A549 (cell line): ENCODE measurements at regions of chr10 and their contacts with region 1.

Region 1: DNA sequence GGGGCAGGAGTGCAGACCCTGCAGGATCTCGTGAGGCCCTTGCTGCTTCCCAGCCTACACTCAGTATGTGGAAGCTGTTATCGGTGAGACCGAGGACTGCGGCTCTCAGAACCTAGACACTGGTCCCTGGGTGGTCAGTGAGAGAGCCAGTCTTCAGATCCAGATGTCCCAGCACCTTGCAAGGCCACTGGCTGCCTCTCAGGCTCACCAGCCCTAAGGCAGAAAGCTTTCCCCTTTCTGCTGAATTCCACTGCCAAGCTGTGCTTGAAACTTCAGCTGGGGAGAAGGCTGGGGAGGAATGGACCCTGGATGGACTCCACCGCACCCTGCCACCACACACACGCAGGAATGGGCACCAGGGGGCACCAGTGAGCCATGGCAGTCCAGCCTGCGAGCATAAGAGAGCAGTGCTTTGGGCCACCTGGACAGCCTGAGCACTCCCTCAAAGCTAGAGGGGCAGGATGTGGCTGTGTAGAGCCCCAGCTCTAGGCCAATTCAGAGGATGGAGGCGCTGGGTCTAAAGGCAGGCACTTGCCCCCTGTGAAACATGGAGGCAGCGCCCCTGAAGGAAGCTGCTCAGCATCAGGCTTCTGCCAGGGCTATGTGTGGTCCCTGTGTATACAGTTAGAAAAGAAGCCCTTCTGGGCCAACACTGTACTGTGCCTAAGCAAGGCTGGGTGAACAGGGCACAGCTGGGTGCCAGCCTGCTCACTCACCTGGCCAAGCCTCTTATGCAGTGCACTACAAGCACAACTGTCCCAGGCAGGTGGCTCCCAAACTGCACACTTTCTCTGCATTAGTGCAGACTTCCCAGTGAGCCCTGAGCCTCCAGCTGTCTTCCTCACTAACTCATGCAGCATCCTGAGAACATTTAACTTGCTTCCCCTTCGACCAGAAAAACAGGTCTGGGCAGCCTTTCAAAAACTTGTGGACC is 21.6 kb downstream of the TMEM72 start:
- DNase-seq: peak; percentile 36 to 71
- ATAC-seq: peak; percentile 92 to 98
- H3K4me3 ChIP-seq: no peak overlapping the region
- H3K27ac ChIP-seq: no peak overlapping the region
- H3K4me1 ChIP-seq: no peaks in the 10 kb centered on the region
- CTCF ChIP-seq: peak; percentile 73
- EP300 ChIP-seq: no peak
- POLR2A ChIP-seq: no peak
- RAD21 ChIP-seq: peak; percentile 84 to 90

Region 2: GRCh38 chr10:44116474-44116873 is 816.3 kb before region 1 on chr10:
- CTCF ChIA-PET with region 1: no interaction called
- POLR2A ChIA-PET with region 1: no interaction called
- DNase-seq: no peak
- ATAC-seq: no peak
- H3K4me3 ChIP-seq: no peak overlapping the region
- H3K27ac ChIP-seq: no peak overlapping the region
- H3K4me1 ChIP-seq: no peaks in the 10 kb centered on the region
- CTCF ChIP-seq: no peak
- EP300 ChIP-seq: no peak
- POLR2A ChIP-seq: no peak
- RAD21 ChIP-seq: no peak

Region 3: DNA sequence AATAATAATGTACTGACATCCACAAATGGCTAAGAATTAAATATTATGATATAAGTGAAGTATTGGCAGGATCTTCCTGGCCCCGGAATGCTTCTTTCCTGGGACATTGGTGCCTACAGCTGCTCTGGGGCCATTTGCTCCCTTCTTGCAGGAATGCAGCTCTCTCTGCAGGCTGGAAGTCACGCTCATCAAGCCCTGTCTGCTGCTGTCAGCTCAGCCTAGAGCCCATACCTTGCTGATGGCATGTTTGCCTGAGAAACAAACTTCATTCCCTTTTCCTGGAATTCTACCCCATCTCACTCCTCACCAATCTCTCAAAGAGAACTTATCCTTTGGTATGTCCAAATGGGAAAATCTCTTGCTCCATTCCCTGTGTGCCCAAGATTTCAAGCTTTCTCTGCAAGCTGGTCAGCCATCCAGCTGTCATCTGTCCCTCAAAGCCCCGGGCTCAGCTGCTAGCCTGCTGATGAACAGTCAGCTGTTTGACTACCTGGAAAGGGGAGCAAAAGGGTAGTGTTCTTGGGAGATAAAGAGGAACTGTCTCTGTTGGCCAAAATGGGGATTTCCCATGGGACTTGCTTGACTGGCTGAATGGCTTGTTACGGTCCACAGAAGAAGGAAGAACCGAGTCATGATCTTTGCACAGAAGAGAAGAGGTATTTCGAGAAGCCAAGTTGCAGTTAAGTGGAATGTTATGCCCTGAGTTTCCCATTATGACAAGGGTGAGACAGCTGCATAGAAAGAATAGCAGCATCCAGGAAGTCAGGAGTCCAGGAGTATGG is 14.8 kb after region 1 on chr10:
- CTCF ChIA-PET with region 1: interaction called, 25 read pairs
- POLR2A ChIA-PET with region 1: no interaction called
- DNase-seq: no peak
- ATAC-seq: no peak
- H3K4me3 ChIP-seq: no peak overlapping the region
- H3K27ac ChIP-seq: no peak overlapping the region
- H3K4me1 ChIP-seq: no peaks in the 10 kb centered on the region
- CTCF ChIP-seq: no peak
- EP300 ChIP-seq: no peak
- POLR2A ChIP-seq: no peak
- RAD21 ChIP-seq: no peak

Region 4: DNA sequence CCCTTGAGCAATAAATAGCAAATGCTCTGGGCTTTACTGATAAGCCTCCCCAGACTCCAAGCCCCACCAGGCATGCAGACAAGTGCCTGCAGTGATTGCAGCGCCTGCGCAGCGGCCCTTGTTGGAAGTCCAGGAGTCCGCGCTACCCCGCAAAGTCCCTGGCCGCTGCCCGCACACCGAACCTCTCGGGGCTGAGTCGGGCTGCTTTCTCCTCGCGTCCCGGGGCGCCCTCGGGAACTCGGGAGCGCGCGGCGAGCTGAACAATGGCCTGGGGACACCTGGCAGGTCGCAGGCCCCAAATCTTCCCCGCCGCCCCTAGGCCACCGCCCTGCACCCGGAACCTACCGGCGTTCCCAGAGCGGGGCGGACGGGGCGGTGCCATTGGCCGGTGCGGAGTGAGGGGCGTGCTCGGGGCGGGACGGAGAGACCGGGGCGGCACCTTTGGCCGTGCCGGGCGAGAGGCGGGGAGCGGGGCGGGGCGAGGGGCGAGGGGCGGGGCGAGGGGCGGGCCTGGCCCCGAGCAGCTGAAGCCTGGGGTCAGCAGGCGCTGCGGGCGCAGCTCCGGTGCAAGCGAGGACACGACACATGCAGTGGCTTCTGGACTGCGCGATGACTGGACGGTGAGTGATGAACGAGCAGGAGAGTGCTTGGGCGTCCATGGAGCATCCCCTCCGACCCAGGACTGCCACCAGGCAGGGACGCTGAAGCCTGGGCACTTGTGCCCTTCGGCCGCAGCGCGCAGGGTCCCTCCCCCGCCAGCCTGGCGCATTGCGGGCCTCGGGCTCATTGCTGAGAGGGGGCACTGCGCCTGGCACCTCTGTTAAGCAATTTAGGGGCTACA is 26.7 kb after region 1 on chr10 and contains the start of gene RASSF4:
- CTCF ChIA-PET with region 1: interaction called, 22 read pairs
- POLR2A ChIA-PET with region 1: no interaction called
- DNase-seq: peak; percentile 85 to 89
- ATAC-seq: peak; percentile 97 to 100
- H3K4me3 ChIP-seq: peak within 1 kb of the TSS; percentile 53
- H3K27ac ChIP-seq: peak within 1 kb of the TSS; percentile 86
- H3K4me1 ChIP-seq: peaks cover 12% of the 10 kb centered on the region; the same call in 2 of the 3 replicates
- CTCF ChIP-seq: no peak
- EP300 ChIP-seq: no peak
- POLR2A ChIP-seq: peak; percentile 82
- RAD21 ChIP-seq: no peak
- polyA plus RNA-seq, gene RASSF4: 2.1 and 2.2 TPM in 2 replicates

Region 5: DNA sequence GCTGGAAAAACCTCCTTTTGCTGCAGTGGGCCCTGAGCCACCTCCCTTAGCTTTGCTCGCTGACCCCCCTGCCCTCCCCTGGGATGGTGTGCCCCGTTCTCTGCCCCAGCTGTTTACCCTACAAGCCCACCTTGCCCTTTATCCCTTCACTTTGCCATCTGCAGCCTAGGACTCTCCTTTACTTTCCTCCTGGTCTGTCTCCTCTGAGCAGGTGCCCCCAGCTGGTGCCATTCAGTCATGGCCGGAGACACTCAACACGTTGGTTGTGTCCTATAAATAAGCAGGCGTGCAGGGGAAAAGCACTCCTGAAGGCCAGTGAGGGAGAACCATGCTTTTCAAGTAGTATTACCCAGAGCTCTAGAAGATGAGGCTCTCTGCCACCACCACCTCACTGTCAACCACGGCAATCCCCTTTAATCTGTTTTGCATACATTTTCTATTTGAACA is 32.9 kb after region 1 on chr10:
- CTCF ChIA-PET with region 1: interaction called, 29 read pairs
- POLR2A ChIA-PET with region 1: no interaction called
- DNase-seq: no peak
- ATAC-seq: no peak
- H3K4me3 ChIP-seq: no peak overlapping the region
- H3K27ac ChIP-seq: no peak overlapping the region; a peak in 1 of 6 replicates
- H3K4me1 ChIP-seq: peaks cover 7% of the 10 kb centered on the region; the same call in 2 of the 3 replicates
- CTCF ChIP-seq: no peak
- EP300 ChIP-seq: no peak
- POLR2A ChIP-seq: no peak
- RAD21 ChIP-seq: no peak

Region 6: DNA sequence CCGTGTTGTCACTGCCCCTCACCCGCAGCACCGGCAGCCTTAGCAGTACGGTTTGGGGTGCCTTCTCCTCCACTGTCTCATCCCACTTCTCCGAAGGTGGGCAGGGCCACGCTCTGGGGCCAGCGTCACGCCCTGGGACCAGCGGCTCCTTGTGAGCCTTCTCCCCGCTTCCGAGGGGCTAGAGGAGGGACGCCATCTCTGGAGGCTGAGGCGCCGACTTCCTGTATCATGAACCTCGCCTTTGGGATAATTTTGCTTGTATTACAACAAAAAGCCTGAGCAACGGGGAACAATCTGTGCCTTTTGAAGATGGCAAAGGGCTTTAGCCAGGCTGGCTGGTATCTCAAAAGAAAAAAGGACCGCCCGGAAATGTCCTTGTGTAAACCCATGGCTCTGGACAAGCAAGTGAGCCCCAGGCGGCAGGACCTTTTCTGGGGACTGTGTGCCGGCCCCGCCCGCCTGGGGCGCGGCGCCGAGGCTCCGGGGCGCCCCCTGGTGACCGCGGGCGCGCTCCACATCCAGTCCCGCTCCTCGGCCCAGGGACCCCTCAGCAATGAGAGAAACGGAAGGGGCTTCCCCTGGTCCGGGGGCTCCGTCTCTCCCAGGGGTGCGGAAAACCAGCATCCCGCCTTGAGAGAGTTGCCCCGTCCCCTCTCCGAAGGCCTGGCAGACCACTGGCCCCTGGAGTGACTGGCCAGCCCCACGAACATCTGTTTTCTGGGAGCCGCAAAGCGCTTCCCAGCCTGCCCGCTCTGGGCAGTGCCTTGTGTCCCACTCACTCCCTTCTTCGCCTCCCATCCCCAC is 42.0 kb after region 1 on chr10:
- CTCF ChIA-PET with region 1: interaction called, 69 read pairs
- POLR2A ChIA-PET with region 1: no interaction called
- DNase-seq: peak; percentile 55 to 72
- ATAC-seq: peak; percentile 70 to 93
- H3K4me3 ChIP-seq: peak overlapping the region; percentile 47
- H3K27ac ChIP-seq: peak overlapping the region; percentile 76 to 90
- H3K4me1 ChIP-seq: peaks cover 33% of the 10 kb centered on the region
- CTCF ChIP-seq: peak; percentile 91
- EP300 ChIP-seq: no peak
- POLR2A ChIP-seq: no peak
- RAD21 ChIP-seq: peak; percentile 47 to 75; a peak in 4 of 5 replicates

Region 7: GRCh38 chr10:44990302-44990655 is 57.5 kb after region 1 on chr10:
- CTCF ChIA-PET with region 1: interaction called, 30 read pairs
- POLR2A ChIA-PET with region 1: no interaction called
- DNase-seq: no peak
- ATAC-seq: peak in 1 of 2 experiments; percentile 78; a peak in 3 of 6 replicates
- H3K4me3 ChIP-seq: no peak overlapping the region
- H3K27ac ChIP-seq: no peak overlapping the region
- H3K4me1 ChIP-seq: peaks cover 4% of the 10 kb centered on the region; the same call in 2 of the 3 replicates
- CTCF ChIP-seq: peak; percentile 18; the same call in 2 of the 3 replicates
- EP300 ChIP-seq: no peak
- POLR2A ChIP-seq: no peak
- RAD21 ChIP-seq: peak; percentile 35 to 43; a peak in 4 of 5 replicates

Region 8: DNA sequence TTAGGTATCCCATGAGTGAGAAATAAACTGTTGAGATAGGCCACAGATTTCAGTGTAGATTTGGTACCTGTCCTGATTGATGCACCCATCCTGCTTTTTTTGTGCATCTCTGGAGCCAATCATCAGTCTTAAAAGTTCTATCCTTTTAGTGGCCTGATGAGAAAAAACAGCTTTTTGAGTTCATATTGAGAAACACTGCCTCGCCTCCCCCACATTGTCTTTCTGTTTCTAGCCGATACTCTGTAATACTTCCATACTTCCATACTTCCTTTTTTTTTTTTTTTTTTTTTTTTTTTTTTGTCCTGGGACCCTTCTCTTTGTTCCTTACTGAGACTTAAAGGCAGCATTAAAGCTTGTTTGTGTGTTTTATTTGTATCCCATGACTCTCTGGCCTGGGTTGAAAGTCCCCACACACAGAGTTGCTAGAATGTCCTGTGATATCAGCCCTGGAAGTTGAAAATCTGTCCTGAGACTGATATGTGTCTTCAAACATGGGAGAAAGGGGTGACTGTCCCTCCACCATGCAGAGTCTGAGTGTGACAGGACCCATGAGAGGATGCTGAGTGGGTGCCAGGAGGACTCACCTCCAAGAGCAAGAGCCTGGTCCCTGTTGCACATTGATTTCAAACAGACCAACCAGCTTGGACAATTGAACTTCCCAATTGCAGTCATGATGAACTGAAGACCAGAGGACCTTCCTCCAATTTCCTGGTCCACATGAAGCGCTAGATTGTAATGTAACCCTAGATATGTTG is 73.7 kb after region 1 on chr10:
- CTCF ChIA-PET with region 1: interaction called, 10 read pairs
- POLR2A ChIA-PET with region 1: no interaction called
- DNase-seq: no peak
- ATAC-seq: no peak
- H3K4me3 ChIP-seq: no peak overlapping the region
- H3K27ac ChIP-seq: no peak overlapping the region
- H3K4me1 ChIP-seq: 0 out of 3 replicates have a peak, but pooled peaks cover under 1% of the 10 kb centered on the region
- CTCF ChIP-seq: no peak
- EP300 ChIP-seq: no peak
- POLR2A ChIP-seq: no peak
- RAD21 ChIP-seq: no peak